HEK293 (cell line): ENCODE measurements at regions of chr3 and their contacts with region 1.

Region 1: DNA sequence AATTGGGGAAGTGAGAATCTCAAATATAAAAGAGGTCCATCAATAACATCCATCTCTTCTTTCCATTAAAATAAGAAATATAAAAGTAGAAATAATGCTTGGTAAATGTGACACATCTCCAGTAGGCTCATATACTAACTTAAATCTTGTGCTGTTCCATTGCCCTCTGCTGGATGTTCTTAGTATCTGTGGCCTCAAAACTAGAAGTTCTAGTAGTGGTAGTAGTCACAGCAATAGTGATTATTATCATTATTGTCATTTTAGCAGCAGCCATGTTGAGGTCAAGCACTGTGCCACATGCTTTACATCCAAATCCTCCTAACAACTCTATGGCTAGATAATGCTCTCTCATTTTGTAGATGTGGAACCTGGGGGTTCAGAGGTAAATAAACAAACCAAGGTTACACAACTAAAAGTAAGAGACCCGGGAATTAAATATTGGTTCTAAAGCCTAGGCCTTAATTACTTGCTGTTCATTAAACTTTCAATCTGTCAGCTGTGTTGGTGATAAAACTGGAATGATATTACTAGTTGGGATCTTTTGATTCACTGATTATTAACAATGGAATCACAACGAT is 20.2 kb upstream of the BTLA start:
- H3K4me3 ChIP-seq: no peak overlapping the region
- H3K27ac ChIP-seq: no peak overlapping the region
- H3K4me1 ChIP-seq: no peaks in the 10 kb centered on the region
- CTCF ChIP-seq: no peak

Region 2: DNA sequence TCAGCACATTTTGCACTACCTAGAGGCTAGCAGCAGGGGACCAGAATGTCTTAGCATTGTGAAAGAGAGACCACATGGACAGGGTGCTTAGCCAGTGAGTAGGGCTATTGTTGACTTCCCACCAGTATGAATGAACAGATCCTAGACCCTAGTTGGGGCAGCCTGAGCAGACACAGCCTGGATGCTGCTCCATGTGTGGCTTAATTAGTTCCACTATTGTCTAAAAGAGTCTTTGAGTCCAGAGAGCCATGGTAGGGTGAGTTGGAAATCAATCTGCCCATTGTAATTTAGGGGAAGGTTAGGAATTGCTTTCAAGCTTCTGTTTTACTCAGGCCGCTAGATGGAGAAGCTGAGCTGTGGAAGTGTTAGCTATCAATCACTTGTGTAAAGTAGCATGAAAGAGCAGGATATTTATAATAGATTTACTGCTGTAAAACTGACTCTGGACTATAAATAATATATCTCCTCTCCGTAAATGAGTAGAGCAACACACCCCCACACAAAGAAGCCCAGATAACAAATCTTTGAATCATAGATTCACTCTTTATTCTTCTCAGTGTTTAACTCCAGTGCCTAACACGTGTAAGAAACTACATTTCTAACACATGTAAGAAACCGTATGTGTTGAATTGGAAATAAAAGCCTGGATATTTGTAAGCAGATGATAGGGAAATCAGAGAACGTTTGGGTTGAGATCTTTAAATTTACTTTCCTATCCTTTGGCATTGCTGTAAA is 382.4 kb before region 1 on chr3:
- CTCF ChIA-PET with region 1: interaction called, 18 read pairs
- POLR2A ChIA-PET with region 1: no interaction called
- H3K4me3 ChIP-seq: no peak overlapping the region
- H3K27ac ChIP-seq: no peak overlapping the region
- H3K4me1 ChIP-seq: peaks cover 12% of the 10 kb centered on the region; the same call in 1 of the 2 replicates
- CTCF ChIP-seq: no peak; the same call in 1 of the 2 replicates

Region 3: DNA sequence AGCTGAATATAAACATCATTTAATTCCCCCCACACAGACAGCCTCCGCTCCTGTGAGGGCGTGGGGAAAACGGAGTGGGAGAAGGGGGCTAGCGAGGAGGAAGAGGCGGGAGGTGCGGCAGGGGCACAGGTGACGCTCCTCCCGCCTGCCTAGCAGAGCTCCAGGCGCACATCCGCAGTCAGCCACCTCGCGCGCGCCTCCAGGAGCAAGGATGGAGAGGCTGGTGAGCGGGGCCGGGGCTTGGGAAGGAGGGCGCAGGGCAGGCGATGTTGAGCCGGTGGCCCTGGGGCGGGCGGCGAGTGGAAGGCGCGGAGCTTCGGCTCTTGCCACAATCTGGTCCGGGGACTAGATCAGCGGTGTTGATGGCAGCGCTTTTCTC is 186.5 kb before region 1 on chr3 and contains the start of gene CD200:
- CTCF ChIA-PET with region 1: interaction called, 12 read pairs
- POLR2A ChIA-PET with region 1: no interaction called
- H3K4me3 ChIP-seq: peak within 1 kb of the TSS; percentile 42
- H3K27ac ChIP-seq: no peak within 1 kb of the TSS
- H3K4me1 ChIP-seq: no peaks in the 10 kb centered on the region
- CTCF ChIP-seq: no peak